ENCODE measurements at regions of chr14 and their contacts with region 1.

Region 1: DNA sequence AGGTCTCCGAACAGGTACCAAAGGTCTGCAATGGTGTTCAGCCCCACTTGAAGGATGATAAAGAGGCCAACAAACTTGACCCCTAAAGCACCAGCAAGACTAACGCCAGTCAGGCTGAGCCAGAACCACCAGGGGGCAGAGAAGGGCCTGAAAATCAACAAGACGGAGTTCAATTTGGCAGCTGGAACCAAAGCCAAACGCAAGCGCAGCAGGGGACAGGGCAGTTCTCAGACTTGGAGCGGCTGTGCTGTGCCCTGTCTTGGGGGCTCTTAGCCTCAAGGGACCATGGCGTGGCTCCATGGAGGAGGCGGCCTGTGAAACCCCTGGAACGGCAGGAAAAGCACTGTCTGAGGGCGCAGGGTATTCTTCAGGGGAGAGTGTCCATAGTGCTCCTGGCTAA is 19.6 kb downstream of the POMT2 start:
- DNase-seq: peak; percentile 80
- H3K4me3 Mint-ChIP-seq: no peak overlapping the region
- H3K27ac Mint-ChIP-seq: no peak overlapping the region
- H3K4me1 Mint-ChIP-seq: peaks cover 25% of the 10 kb centered on the region
- H3K27me3 Mint-ChIP-seq: no peaks in the 10 kb centered on the region
- CTCF ChIP-seq: peak; percentile 86

Region 2: DNA sequence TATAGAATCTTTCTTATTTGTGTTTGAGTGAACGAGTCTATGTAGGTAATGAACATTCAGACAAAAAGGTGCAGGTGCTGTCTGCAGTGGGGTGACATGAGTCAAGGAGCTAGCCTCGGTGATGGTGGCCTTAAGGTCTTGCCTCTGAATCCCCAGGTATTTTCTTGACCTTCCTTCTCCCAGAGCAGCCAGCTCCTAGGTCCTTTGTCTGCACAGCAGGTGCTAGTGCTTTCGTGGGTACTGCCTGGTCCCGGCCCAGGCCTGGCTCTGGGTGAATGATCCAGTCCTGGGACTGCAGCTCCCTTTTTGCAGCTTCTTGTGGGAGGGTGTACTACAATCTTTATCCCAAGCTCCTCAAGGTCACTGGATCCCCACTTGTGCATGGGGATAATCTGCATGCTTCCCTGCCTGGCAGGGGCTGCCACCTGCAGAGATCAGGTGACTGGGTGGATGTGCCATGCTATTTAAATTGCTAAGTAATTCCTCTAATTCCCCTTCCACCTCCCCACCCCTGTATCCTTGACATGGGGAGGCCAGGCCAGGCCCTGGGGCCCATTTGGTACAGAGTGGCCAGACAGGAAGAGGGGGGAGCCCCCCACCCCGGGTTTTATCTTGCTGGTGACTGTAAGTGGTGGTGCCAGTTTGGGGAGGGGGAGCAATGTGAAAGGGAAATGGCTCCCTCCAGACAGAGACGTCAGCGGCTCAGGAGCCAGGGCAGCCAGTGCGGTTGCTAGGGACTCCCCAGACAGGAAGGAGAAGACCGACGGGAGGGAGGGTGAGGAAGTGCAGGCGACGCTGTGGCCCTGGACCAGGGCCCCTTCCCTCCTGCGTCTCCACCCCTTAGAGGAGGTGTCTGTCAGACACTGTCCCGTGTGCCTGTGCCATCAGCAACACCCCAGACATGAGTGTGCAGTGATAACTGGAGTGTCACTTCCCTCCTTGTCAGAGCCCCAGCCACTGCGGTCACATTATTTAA is 533.1 kb before region 1 on chr14:
- CTCF ChIA-PET with region 1: no interaction called
- intact Hi-C with region 1: no loop called
- DNase-seq: no peak
- H3K4me3 Mint-ChIP-seq: no peak overlapping the region
- H3K27ac Mint-ChIP-seq: no peak overlapping the region
- H3K4me1 Mint-ChIP-seq: no peaks in the 10 kb centered on the region
- H3K27me3 Mint-ChIP-seq: peaks cover 53% of the 10 kb centered on the region
- CTCF ChIP-seq: no peak

Region 3: DNA sequence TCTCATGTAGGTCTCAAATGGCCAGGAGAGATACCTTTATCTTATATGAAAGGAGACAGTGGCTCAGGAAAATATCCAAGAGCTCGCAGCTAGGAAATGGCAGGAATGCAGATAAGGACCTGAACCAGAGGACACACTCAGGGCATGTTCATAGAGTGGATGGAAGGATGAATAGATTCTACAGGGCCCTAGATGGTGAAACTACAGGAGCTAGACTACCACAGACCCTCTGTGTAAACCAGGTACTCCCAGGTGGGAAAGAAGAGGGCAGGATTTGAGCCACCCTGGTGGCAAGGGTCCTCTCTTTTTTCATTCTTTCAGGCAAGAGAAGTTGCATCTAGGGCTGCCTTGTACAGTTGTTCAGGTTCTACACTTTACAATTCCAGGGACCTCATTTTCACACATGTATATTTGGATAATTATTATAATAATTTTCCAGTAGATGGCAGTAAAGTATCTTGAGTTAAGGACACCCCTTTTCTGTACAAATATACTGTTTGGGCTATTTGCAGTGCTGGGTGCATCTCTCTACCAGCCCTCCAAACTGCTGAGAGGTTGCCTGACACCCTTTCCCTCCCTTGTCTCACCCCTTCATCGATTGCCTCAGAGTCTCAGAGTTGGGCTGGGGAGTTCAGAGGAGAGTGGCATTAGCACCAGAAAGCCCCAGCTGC is 149.1 kb before region 1 on chr14:
- CTCF ChIA-PET with region 1: interaction called, 4 read pairs
- intact Hi-C with region 1: loop called (anchors 1 kb)
- DNase-seq: no peak
- H3K4me3 Mint-ChIP-seq: no peak overlapping the region
- H3K27ac Mint-ChIP-seq: no peak overlapping the region
- H3K4me1 Mint-ChIP-seq: no peaks in the 10 kb centered on the region
- H3K27me3 Mint-ChIP-seq: peaks cover 63% of the 10 kb centered on the region
- CTCF ChIP-seq: no peak

Region 4: DNA sequence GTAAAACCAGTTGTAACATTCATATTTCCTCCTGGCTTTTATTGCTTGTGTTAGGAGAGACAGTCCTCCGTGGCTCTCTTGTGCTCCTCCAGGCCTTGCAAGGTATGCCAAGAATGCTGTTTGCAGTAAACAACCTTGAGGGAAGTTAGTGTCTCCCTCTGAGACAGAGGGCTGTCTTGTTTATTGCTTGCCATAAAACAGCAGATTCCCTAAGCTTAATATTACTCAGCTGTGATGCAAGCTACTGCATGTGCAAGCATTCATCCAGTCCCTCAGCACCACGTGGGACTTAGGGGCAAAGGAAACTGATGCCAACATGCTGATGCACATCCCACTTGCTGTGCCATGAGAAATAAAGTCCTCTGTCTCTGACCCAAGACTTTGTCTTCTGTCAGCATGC is 12.9 kb after region 1 on chr14:
- CTCF ChIA-PET with region 1: interaction called, 94 read pairs
- intact Hi-C with region 1: loop called (anchors 1 kb)
- DNase-seq: no peak
- H3K4me3 Mint-ChIP-seq: no peak overlapping the region
- H3K27ac Mint-ChIP-seq: no peak overlapping the region
- H3K4me1 Mint-ChIP-seq: peaks cover 15% of the 10 kb centered on the region
- H3K27me3 Mint-ChIP-seq: no peaks in the 10 kb centered on the region
- CTCF ChIP-seq: no peak

Region 5: DNA sequence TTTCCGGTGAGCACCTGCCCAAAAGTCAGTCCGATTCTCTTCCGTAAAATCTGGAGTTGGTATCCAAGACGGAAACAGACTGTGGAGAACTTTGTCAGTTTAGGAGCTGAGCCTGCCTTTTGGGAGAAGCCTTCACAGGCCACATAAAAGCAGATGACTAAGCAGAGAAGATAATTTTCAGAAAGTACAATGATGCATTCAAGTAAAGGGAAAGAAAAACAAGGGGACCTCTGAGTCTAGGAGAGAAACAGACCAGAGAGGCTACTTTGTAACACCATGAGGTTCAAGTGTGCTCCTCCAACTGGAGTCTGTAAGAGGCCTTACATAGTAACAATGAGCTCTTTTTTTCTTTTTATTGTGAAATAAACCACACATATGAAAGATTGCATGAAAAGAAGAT is 54.7 kb after region 1 on chr14:
- CTCF ChIA-PET with region 1: no interaction called
- intact Hi-C with region 1: no loop called
- DNase-seq: no peak
- H3K4me3 Mint-ChIP-seq: no peak overlapping the region
- H3K27ac Mint-ChIP-seq: no peak overlapping the region
- H3K4me1 Mint-ChIP-seq: no peaks in the 10 kb centered on the region
- H3K27me3 Mint-ChIP-seq: no peaks in the 10 kb centered on the region
- CTCF ChIP-seq: no peak

Region 6: GRCh38 chr14:77554207-77554606 is 253.1 kb after region 1 on chr14:
- CTCF ChIA-PET with region 1: no interaction called
- intact Hi-C with region 1: loop called (anchors 5 kb)
- DNase-seq: no peak
- H3K4me3 Mint-ChIP-seq: no peak overlapping the region
- H3K27ac Mint-ChIP-seq: no peak overlapping the region
- H3K4me1 Mint-ChIP-seq: no peaks in the 10 kb centered on the region
- H3K27me3 Mint-ChIP-seq: no peaks in the 10 kb centered on the region
- CTCF ChIP-seq: no peak